HCT116 (cell line): ENCODE measurements at regions of chr10 and their contacts with region 1.

Region 1: GRCh38 chr10:101818119-101818871 is at the start of gene OGA:
- DNase-seq: peak; percentile 100
- ATAC-seq: peak; percentile 91
- H3K4me3 ChIP-seq: peak within 1 kb of the TSS; percentile 87 to 96
- H3K27ac ChIP-seq: peak within 1 kb of the TSS; percentile 81
- H3K4me1 ChIP-seq: peaks cover 18 to 31% of the 10 kb centered on the region in 2 experiments
- H3K27me3 ChIP-seq: no peaks in the 10 kb centered on the region
- CTCF ChIP-seq: no peak
- POLR2A ChIP-seq: peak; percentile 90
- RAD21 ChIP-seq: no peak
- total RNA-seq, gene OGA: 127 TPM

Region 2: GRCh38 chr10:101358706-101359300 is 459.5 kb before region 1 on chr10:
- CTCF ChIA-PET with region 1: no interaction called
- POLR2A ChIA-PET with region 1: no interaction called
- RAD21 ChIA-PET with region 1: no interaction called
- intact Hi-C with region 1: no loop called
- DNase-seq: no peak
- ATAC-seq: no peak
- H3K4me3 ChIP-seq: no peak overlapping the region
- H3K27ac ChIP-seq: no peak overlapping the region
- H3K4me1 ChIP-seq: peaks cover 6 to 26% of the 10 kb centered on the region in 2 experiments; a peak in 3 of 4 replicates
- H3K27me3 ChIP-seq: no peaks in the 10 kb centered on the region
- CTCF ChIP-seq: no peak
- POLR2A ChIP-seq: no peak
- RAD21 ChIP-seq: no peak

Region 3: DNA sequence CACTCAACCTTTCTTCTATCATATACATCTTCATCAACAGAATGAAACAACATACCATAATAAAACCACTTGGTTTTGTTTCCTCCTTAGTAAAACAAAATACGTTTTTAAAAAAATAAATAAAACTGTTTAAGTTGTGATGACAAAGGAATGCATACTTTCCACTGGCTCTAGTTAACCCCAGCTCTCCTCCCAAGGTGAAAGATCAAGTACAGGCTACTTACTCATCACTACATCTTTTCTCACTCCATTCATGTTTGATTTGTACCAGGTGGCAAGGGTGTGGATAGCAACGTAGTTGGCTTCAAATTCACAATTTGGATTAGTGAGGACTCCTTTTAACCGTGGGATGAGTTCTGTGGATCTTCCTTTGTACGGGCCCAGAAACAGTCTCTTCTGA is 14.8 kb before region 1 on chr10:
- CTCF ChIA-PET with region 1: no interaction called
- POLR2A ChIA-PET with region 1: no interaction called
- RAD21 ChIA-PET with region 1: no interaction called
- intact Hi-C with region 1: no loop called
- DNase-seq: no peak
- ATAC-seq: no peak
- H3K4me3 ChIP-seq: no peak overlapping the region
- H3K27ac ChIP-seq: no peak overlapping the region
- H3K4me1 ChIP-seq: no peaks in the 10 kb centered on the region
- H3K27me3 ChIP-seq: no peaks in the 10 kb centered on the region
- CTCF ChIP-seq: no peak
- POLR2A ChIP-seq: no peak
- RAD21 ChIP-seq: no peak

Region 4: DNA sequence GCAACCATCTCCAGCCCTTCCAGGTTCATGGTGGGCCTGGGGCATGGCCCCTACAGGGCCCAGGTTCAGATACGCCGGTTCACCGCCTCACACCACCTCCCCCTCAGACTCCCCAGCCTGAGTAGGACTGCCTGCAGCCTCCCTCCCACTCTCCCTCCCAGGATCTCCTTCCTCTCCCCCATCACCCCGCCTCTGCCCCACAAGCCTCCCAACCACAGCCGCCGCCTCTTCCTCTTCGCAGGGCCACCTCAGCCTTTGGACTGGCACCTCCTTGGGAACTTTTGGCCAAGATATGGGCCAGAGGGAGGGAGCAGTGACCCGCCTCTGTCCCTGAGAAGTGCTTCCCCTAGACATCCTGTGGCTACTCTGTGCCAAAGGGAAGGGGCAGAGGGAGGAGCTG is 16.0 kb after region 1 on chr10:
- CTCF ChIA-PET with region 1: interaction called, 19 read pairs
- POLR2A ChIA-PET with region 1: interaction called, 10 read pairs
- RAD21 ChIA-PET with region 1: interaction called, 6 to 8 read pairs
- intact Hi-C with region 1: no loop called
- DNase-seq: no peak
- ATAC-seq: no peak
- H3K4me3 ChIP-seq: no peak overlapping the region
- H3K27ac ChIP-seq: no peak overlapping the region
- H3K4me1 ChIP-seq: peaks cover 23 to 54% of the 10 kb centered on the region in 2 experiments
- H3K27me3 ChIP-seq: no peaks in the 10 kb centered on the region
- CTCF ChIP-seq: no peak
- POLR2A ChIP-seq: no peak
- RAD21 ChIP-seq: no peak